ENCODE measurements at regions of chr7 and their contacts with region 1.

Region 1: GRCh38 chr7:90424720-90425119 is 21.5 kb downstream of the CLDN12 start:
- DNase-seq: no peak
- H3K4me3 ChIP-seq: no peak overlapping the region
- H3K27ac ChIP-seq: no peak overlapping the region
- H3K4me1 ChIP-seq: no peaks in the 10 kb centered on the region
- H3K27me3 ChIP-seq: no peaks in the 10 kb centered on the region
- CTCF ChIP-seq: no peak
- POLR2A ChIP-seq: no peak

Region 2: DNA sequence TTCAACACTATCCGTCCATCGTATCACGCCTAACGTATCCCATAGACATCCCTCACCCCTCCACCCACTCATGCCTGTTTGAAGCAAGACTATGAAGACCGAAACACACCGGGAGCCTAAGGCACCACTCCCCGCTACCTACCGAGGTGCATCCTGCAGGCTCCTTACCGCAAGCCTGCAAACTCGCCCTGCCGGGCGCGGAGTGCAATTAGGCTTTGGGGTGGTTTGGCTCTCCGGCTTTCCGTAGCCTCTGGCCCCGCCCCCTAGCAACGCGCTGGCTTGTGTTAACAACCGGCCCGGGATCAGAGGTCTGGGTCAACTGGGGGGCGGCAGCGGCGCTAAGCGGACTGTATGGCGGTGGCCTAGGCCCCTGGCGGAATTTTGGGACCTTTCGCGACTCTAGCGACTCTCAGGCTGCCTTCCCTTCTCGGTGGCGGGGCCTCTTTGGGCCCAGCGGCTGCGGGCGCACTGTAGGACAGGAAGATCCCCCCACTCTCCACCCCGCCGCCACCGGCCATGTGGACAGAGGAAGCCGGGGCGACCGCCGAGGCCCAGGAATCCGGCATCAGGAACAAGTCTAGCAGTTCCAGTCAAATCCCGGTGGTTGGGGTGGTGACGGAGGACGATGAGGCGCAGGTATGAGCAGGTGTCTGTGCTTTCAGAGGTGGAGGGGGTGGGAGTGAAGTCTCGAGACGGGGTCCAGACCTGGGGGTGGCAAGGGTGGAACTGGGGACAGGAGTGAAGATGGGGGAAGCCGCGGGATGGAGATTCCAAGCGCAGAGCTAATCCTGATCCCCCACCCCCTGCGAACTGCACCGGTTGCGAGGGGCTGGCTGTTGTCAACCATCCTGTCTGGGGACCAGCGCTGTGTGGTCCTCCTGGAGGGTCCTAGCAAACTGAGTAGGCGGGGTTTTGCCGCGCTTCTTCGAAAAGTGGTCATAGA is 179.5 kb before region 1 on chr7 and contains the start of gene CFAP69:
- intact Hi-C with region 1: loop called in 1 of 2 experiments (anchors 10 kb)
- DNase-seq: peak; percentile 88 to 97 (median 91)
- H3K4me3 ChIP-seq: peak within 1 kb of the TSS; percentile 48 to 99 (median 80)
- H3K27ac ChIP-seq: peak within 1 kb of the TSS in 1 of 5 donors; percentile 49
- H3K4me1 ChIP-seq: peaks cover 0 to 15% of the 10 kb centered on the region in 2 donors
- H3K27me3 ChIP-seq: no peaks in the 10 kb centered on the region
- CTCF ChIP-seq: peak in 5 of 6 experiments; percentile 6 to 65 (median 52)
- POLR2A ChIP-seq: no peak
- total RNA-seq, gene CFAP69: 0.42 to 7.9 (median 4.1) TPM

Region 3: DNA sequence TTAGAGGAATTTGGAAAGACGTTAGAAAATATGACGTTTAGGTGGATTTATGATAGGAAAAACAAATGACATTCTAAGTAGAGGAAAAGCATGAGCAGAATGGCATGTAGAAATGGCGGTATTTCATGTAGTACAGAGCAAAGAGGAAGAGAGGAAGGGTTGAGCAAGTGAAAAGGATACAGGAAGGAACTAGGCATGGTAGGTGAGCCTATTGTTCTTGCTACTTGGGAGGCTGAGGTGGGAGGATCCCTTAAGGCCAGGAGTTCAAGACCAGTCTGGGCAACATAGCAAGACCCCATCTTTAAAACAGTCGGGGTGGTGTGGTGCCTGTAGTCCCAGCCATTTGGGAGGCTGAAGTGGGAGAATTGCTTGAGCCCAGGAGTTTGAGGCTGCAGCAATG is 77.0 kb before region 1 on chr7:
- intact Hi-C with region 1: no loop called
- DNase-seq: no peak
- H3K4me3 ChIP-seq: no peak overlapping the region
- H3K27ac ChIP-seq: no peak overlapping the region
- H3K4me1 ChIP-seq: peaks cover 4 to 20% of the 10 kb centered on the region in 2 donors
- H3K27me3 ChIP-seq: no peaks in the 10 kb centered on the region
- CTCF ChIP-seq: no peak
- POLR2A ChIP-seq: no peak

Measured in adrenal gland (tissue), 19 donors.